IMR-90 (cell line): ENCODE measurements at regions of chr12 and their contacts with region 1.

Region 1: DNA sequence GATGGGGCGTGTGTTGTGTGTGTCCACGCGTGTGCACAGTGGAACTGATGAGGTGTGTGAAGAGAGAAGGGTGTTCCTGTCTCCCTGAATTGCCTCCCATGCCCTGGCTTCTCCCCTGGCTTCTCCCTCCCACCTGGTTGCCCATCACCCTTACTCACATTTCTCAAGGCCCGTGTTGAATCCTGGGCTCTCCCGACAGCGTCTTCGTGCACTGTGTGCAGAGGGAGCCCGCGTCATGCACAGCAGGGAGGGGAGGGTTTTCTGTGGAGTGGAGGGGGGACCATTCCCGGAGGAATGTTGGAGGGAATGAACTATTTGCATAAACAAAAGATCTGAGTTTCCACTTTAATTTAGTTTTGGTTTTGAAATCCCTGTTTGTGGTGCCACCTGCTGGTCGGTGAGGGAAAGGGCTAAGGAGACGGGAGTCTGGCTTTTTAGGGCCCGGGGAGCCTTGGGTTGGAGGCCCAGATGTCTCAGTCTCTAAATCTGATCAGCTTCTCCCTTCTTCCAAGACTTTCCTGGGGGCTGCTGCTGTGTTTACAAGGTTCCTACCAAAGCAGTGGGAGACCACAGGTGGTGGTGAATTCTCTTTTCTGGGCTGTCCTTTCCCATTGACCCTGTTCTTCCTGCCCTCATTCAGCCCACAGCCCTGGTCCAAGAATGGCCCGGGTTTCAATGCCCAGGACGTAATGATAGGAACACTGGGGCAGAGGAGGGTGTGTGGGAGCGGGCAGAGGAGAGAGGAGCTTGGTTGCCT is at the start of gene C1R:
- DNase-seq: peak; percentile 92
- ATAC-seq: peak; percentile 94
- H3K4me3 ChIP-seq: peak within 1 kb of the TSS; percentile 55
- H3K27ac ChIP-seq: peak within 1 kb of the TSS; percentile 84
- H3K4me1 ChIP-seq: peaks cover 26% of the 10 kb centered on the region
- H3K27me3 ChIP-seq: no peaks in the 10 kb centered on the region
- CTCF ChIP-seq: peak; percentile 94
- POLR2A ChIP-seq: no peak
- RAD21 ChIP-seq: peak; percentile 85
- total RNA-seq, gene C1R: 19.4 and 38.4 TPM in 2 replicates

Region 2: GRCh38 chr12:7079826-7080125 is 12.6 kb before region 1 on chr12:
- CTCF ChIA-PET with region 1: interaction called, 4 read pairs
- POLR2A ChIA-PET with region 1: no interaction called
- dilution Hi-C with region 1: no loop called
- in situ Hi-C with region 1: no loop called
- intact Hi-C with region 1: loop called (anchors 1 kb)
- DNase-seq: peak; percentile 76
- ATAC-seq: peak; percentile 79
- H3K4me3 ChIP-seq: no peak overlapping the region
- H3K27ac ChIP-seq: peak overlapping the region; percentile 59
- H3K4me1 ChIP-seq: peaks cover 17% of the 10 kb centered on the region
- H3K27me3 ChIP-seq: no peaks in the 10 kb centered on the region
- CTCF ChIP-seq: no peak
- POLR2A ChIP-seq: no peak
- RAD21 ChIP-seq: no peak